AG04450 (cell line): ENCODE measurements at regions of chr6 and their contacts with region 1.

Region 1: GRCh38 chr6:135853227-135853626 is 1.7 kb downstream of the PDE7B start:
- DNase-seq: no peak
- H3K4me3 ChIP-seq: peak overlapping the region; percentile 68
- H3K27ac ChIP-seq: no peak overlapping the region
- H3K27me3 ChIP-seq: no peaks in the 10 kb centered on the region
- CTCF ChIP-seq: peak; percentile 25; the same call in 1 of the 2 replicates

Region 2: DNA sequence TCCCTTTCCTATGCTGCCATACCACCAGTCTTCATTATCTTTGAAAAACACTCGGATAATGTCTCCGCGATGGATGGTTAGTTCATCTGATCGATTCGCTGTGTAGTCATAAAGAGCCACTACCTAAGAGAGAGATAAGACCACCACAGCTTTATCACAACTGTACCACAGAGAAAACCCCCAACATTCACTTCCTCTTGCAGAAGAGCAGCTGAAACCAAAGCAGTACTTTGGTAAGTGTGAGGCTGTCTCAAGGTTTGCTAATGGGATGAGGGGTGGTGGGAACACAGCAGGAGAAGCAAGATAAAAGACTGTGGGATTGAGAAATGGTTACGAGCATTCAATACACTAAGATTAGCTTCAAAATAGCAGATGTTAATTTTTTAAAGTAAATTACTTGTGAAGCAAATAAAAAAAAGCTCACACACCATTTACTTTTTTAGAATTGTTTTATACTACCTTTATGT is 530.0 kb before region 1 on chr6:
- CTCF ChIA-PET with region 1: no interaction called
- POLR2A ChIA-PET with region 1: no interaction called
- DNase-seq: no peak
- H3K4me3 ChIP-seq: no peak overlapping the region
- H3K27ac ChIP-seq: no peak overlapping the region
- H3K27me3 ChIP-seq: no peaks in the 10 kb centered on the region
- CTCF ChIP-seq: no peak

Region 3: GRCh38 chr6:135535989-135536414 is 317.2 kb before region 1 on chr6:
- CTCF ChIA-PET with region 1: interaction called, 11 read pairs
- POLR2A ChIA-PET with region 1: no interaction called
- DNase-seq: peak; percentile 94
- H3K4me3 ChIP-seq: no peak overlapping the region
- H3K27ac ChIP-seq: no peak overlapping the region
- H3K27me3 ChIP-seq: no peaks in the 10 kb centered on the region
- CTCF ChIP-seq: peak; percentile 68